Heart left ventricle (tissue), 16 donors: ENCODE measurements at regions of chr9 and their contacts with region 1.

Region 1: DNA sequence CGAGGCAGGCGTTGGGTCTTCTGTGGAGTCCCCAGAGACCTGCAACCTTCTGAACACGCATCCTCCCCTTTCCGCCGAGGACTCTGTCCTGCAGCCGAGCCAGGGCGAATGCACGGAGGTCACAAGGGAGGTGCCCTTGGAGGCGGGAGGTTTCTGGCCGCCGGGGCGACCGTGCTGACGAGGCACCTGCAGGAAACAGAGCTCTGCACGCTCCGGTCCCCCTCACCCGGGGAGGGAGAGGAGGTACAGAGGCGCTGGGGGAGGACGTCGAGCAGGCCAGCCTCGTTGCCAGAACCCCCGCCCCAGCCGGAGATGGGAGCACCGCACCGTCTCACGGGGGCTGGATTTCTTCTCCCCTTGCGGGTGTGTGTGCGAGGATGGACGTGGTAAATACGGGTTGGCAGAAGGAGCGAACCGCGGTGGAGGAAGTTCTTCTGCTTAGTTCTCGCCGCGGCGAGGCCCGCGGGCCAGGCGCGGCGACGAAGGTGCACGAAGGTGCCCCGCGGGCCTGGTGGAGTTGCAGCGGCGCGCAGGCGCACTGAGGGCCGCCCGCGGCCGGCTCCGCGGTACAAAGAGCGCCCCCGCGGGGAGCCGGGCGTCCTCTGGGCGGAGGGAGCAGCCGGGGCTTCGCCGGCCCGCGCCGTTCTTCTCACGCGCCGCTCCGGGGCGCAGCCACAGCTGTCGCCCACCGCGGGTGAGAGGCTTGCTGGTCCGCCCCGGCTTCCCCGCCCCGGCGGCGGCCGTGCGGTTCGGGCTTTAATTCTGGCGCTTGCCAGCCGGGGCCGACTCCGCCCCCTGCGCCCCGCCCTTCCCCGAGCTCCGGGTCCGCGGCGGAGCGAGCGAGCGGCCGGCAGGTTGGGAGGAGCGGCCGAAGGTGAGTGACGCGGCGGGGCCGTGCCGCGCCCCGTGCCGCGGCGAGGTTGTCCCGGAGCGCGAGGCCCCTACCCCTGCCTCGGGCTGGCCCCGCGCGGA is 289.5 kb downstream of the DOCK8 start:
- DNase-seq: peak; percentile 67 to 90 (median 81)
- ATAC-seq: peak; percentile 70 to 91 (median 85)
- H3K4me3 ChIP-seq: peak within 1 kb of the TSS; percentile 61 to 94 (median 72)
- H3K27ac ChIP-seq: peak within 1 kb of the TSS; percentile 66 to 90 (median 85)
- H3K4me1 ChIP-seq: peaks cover 0 to 27% (median 13%) of the 10 kb centered on the region in 12 donors
- H3K27me3 ChIP-seq: peaks cover 0 to 19% (median 0%) of the 10 kb centered on the region in 9 donors
- CTCF ChIP-seq: peak in 8 of 12 donors; percentile 21 to 64 (median 49)
- POLR2A ChIP-seq: peak in 1 of 2 donors; percentile 62

Region 2: GRCh38 chr9:437574-438001 is 66.6 kb before region 1 on chr9:
- intact Hi-C with region 1: loop called in 2 of 10 experiments (anchors 5 to 10 kb)
- DNase-seq: no peak
- ATAC-seq: peak; percentile 63 to 87 (median 80)
- H3K4me3 ChIP-seq: no peak overlapping the region
- H3K27ac ChIP-seq: peak overlapping the region in 10 of 12 donors; percentile 27 to 70 (median 56)
- H3K4me1 ChIP-seq: peaks cover 0 to 20% (median 4%) of the 10 kb centered on the region in 12 donors
- H3K27me3 ChIP-seq: no peaks in the 10 kb centered on the region
- CTCF ChIP-seq: no peak
- POLR2A ChIP-seq: no peak

Region 3: DNA sequence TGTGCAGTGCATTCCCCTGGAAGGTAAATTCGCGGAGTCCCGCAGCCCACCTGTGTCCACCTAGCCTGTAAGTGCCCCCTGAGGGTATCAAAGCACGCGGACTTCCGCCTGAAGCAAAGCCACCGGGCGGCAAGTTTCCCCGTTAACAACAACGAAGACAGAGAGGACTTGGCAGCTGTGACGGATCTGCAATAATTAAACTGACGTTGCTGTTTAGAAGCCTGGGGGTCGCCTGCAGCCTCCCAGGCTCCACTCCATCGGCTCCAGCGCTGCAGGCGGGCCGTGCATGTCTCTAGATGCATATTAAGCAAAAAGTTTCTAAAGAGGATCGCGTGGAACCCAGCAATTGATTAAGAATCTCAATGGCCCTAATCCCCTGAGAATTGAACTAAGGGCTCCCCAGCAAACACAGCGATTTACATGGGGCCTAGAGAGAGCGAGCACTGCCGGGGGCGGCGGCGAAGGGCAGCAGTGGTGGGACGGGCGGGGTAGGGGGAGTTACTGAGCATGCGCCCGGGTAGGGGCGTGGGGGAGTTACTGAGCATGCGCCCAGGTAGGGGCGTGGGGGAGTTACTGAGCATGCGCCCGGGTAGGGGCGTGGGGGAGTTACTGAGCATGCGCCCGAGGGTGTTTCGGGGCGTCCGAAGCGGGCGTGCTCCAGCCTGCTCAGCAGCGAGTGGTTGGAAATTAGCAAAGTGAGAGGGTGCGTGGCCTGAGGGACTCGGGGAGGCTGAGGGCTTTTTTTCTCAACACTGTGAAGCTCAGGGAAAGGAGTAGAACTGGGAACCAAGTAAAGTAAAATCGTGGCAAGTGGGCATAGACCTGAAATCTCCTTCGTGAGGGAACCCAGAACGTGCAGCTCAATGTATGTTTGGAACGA is 34.3 kb before region 1 on chr9:
- intact Hi-C with region 1: loop called in 1 of 10 experiments (anchors 2 kb)
- DNase-seq: peak; percentile 79 to 92 (median 91)
- ATAC-seq: peak; percentile 96 to 99 (median 98)
- H3K4me3 ChIP-seq: peak overlapping the region in 11 of 12 donors; percentile 43 to 76 (median 64)
- H3K27ac ChIP-seq: peak overlapping the region in 11 of 12 donors; percentile 75 to 91 (median 83)
- H3K4me1 ChIP-seq: peaks cover 0 to 30% (median 11%) of the 10 kb centered on the region in 12 donors
- H3K27me3 ChIP-seq: no peaks in the 10 kb centered on the region
- CTCF ChIP-seq: no peak
- POLR2A ChIP-seq: peak in 1 of 2 donors; percentile 70

Region 4: GRCh38 chr9:546797-547223 is 42.6 kb after region 1 on chr9:
- intact Hi-C with region 1: loop called in 2 of 10 experiments (anchors 1 to 5 kb)
- DNase-seq: no peak
- ATAC-seq: peak; percentile 69 to 76 (median 71)
- H3K4me3 ChIP-seq: peak overlapping the region in 9 of 12 donors; percentile 10 to 35 (median 25)
- H3K27ac ChIP-seq: peak overlapping the region; percentile 50 to 84 (median 70)
- H3K4me1 ChIP-seq: peaks cover 5 to 50% (median 24%) of the 10 kb centered on the region in 12 donors
- H3K27me3 ChIP-seq: no peaks in the 10 kb centered on the region
- CTCF ChIP-seq: peak; percentile 6 to 59 (median 40)
- POLR2A ChIP-seq: no peak

Region 5: DNA sequence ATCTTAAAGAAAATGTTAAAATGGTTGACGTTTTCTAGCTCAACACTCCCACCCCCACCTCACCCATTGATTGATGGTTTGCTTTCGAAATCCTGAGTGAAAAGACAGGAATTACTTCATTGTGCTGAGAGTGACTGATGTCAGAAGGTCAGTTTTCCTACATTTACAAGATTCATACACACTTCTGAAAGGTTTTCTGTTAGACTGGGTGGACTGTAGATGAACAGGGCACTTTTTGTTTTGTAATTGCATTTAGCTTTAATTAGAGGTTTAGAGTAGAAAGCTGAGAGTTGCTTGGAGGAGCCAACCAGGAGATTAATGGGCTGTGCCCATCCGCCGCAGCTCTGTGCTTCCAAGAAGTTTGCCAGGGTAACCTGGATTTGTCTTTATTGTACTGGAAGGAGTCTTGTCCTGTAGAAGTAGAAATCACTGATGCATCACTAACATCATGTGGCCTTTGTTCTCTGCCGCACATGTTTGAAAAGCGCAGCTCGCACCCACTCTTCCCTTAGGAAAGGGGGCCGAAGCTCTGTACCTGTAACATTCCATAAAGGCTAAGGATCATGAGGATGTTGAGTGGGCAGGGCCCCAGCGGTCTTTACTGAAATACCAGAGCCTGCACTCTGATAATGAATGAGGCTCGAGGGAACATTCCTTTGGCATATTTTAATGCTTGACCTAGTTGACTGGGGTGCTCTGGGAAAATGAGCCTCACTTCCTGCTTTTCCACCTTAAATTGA is 69.7 kb after region 1 on chr9:
- intact Hi-C with region 1: loop called in 1 of 10 experiments (anchors 2 kb)
- DNase-seq: peak in 1 of 5 donors; percentile 33
- ATAC-seq: peak in 3 of 4 donors; percentile 24 to 42 (median 26)
- H3K4me3 ChIP-seq: no peak overlapping the region
- H3K27ac ChIP-seq: peak overlapping the region; percentile 52 to 94 (median 79)
- H3K4me1 ChIP-seq: peaks cover 0 to 70% (median 25%) of the 10 kb centered on the region in 12 donors
- H3K27me3 ChIP-seq: no peaks in the 10 kb centered on the region
- CTCF ChIP-seq: no peak
- POLR2A ChIP-seq: no peak

Region 6: DNA sequence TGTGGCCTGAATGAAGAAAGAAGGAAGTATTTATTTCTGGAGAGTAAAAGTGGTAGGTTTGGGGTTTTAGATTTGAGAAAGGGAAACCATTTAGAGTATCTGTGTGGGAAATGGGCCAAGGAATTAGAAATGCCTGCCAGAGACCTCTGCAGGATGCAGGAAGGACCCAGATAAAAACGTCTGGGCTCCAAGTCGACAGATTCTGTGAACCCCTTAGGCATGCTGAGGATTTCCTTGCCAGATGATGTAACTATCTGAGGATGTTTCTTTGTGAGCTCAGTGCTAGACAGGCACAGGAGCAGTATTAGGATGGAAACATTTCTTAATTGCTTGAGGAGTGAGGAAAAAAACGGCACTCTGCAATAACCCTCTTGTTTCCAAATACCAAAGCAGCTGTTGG is 85.6 kb after region 1 on chr9:
- intact Hi-C with region 1: loop called in 1 of 10 experiments (anchors 10 kb)
- DNase-seq: no peak
- ATAC-seq: peak in 3 of 4 donors; percentile 34 to 59 (median 52)
- H3K4me3 ChIP-seq: no peak overlapping the region
- H3K27ac ChIP-seq: peak overlapping the region in 11 of 12 donors; percentile 17 to 87 (median 75)
- H3K4me1 ChIP-seq: peaks cover 0 to 71% (median 27%) of the 10 kb centered on the region in 12 donors
- H3K27me3 ChIP-seq: no peaks in the 10 kb centered on the region
- CTCF ChIP-seq: no peak
- POLR2A ChIP-seq: no peak

Region 7: GRCh38 chr9:596701-597100 is 92.5 kb after region 1 on chr9:
- intact Hi-C with region 1: loop called in 2 of 10 experiments (anchors 5 to 10 kb)
- DNase-seq: no peak
- ATAC-seq: no peak
- H3K4me3 ChIP-seq: peak overlapping the region in 6 of 12 donors; percentile 1 to 51 (median 43)
- H3K27ac ChIP-seq: peak overlapping the region in 10 of 12 donors; percentile 14 to 87 (median 74)
- H3K4me1 ChIP-seq: peaks cover 0 to 20% (median 0%) of the 10 kb centered on the region in 12 donors
- H3K27me3 ChIP-seq: no peaks in the 10 kb centered on the region
- CTCF ChIP-seq: no peak
- POLR2A ChIP-seq: no peak

Region 8: GRCh38 chr9:982394-983230 is 478.4 kb after region 1 on chr9:
- intact Hi-C with region 1: no loop called
- DNase-seq: no peak
- ATAC-seq: no peak
- H3K4me3 ChIP-seq: no peak overlapping the region
- H3K27ac ChIP-seq: no peak overlapping the region
- H3K4me1 ChIP-seq: no peaks in the 10 kb centered on the region
- H3K27me3 ChIP-seq: peaks cover 27 to 98% (median 74%) of the 10 kb centered on the region in 9 donors
- CTCF ChIP-seq: no peak
- POLR2A ChIP-seq: no peak